ENCODE measurements at regions of chr1 and their contacts with region 1.

Region 1: DNA sequence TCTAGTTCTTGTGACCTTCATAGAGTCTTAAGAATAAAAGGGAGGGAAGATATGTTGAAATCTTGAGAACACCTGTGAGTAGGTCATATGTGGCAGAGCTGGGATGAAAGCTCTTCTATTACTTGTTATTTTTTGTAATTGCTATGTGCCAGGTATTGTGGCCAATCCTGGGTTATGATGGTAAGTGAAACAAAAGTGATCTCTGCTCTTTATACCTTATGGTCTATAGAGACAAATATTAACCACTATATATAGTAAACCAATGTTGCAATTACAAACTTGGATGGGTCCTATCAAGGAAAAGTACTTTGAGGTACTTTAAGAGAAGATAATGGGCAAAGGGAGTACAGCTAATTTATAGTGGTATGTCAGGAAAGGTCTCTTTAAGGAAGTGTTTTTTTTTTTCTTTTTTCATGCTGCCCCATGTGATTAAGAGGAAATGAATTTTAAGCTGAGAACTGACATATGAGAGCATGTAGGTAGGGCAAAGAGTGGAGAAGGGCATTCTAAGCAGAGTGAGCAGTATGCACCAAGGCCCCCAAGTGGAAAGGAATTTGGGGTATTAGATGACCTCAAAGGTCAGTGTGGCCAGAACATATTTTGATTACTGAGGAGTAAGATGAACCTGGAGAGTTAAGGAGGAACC is 43.3 kb downstream of the POU2F1 start:
- DNase-seq: peak in 2 of 3 donors; percentile 12 to 25
- H3K4me3 ChIP-seq: no peak overlapping the region
- H3K4me3 Mint-ChIP-seq: no peak overlapping the region
- H3K27ac ChIP-seq: no peak overlapping the region
- H3K27ac Mint-ChIP-seq: no peak overlapping the region
- H3K4me1 ChIP-seq: peaks cover 14 to 21% of the 10 kb centered on the region in 2 donors
- H3K4me1 Mint-ChIP-seq: peaks cover 17% of the 10 kb centered on the region
- H3K27me3 ChIP-seq: no peaks in the 10 kb centered on the region
- H3K27me3 Mint-ChIP-seq: no peaks in the 10 kb centered on the region
- CTCF ChIP-seq: no peak

Region 2: GRCh38 chr1:167294528-167294927 is 30.6 kb after region 1 on chr1:
- intact Hi-C with region 1: no loop called
- DNase-seq: peak; percentile 36 to 67 (median 56)
- H3K4me3 ChIP-seq: no peak overlapping the region
- H3K4me3 Mint-ChIP-seq: peak overlapping the region in 1 of 2 donors; percentile 5
- H3K27ac ChIP-seq: peak overlapping the region; percentile 44 to 64
- H3K27ac Mint-ChIP-seq: peak overlapping the region; percentile 77 to 91 (median 82)
- H3K4me1 ChIP-seq: peaks cover 56 to 74% of the 10 kb centered on the region in 2 donors
- H3K4me1 Mint-ChIP-seq: peaks cover 74% of the 10 kb centered on the region
- H3K27me3 ChIP-seq: no peaks in the 10 kb centered on the region
- H3K27me3 Mint-ChIP-seq: no peaks in the 10 kb centered on the region
- CTCF ChIP-seq: no peak

Region 3: DNA sequence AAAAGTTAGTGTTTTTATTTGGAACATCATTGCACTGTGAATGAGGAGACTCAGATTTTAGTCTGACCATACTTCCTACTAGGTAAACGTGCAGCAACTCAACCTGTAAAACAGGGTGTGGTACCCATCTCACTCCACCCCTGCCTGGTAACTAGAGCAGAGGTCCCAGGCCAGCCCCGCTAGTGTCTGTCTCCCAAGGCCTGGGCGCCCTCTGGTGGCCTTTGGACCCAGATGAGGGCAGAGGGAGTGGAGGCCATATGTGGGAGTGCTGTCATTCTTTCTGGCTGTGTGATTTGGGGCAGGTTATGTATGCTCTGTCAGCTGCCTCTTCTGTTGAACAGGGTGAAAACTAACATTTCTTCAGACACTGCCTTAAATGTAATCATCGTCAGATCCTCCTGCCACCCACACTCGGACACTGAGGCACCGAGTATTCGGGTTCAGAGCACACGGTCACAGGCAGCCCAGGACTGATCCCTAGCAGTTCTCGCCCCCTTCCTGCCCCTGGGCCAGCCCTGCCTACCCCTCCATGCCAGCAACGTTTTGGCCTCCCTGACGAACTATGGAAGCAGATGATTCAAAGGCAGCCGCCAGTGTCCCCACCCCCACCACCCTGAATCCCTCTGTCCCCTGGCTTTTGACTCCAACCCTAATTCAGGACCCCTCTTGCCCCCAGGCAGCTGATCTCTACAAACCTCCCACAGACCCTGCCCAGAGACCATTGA is 178.3 kb after region 1 on chr1:
- intact Hi-C with region 1: loop called (anchors 2 to 5 kb)
- DNase-seq: peak; percentile 59 to 67 (median 62)
- H3K4me3 ChIP-seq: no peak overlapping the region
- H3K4me3 Mint-ChIP-seq: peak overlapping the region in 1 of 2 donors; percentile 16
- H3K27ac ChIP-seq: no peak overlapping the region
- H3K27ac Mint-ChIP-seq: peak overlapping the region in 3 of 7 donors; percentile 6 to 42 (median 38)
- H3K4me1 ChIP-seq: peaks cover 20 to 24% of the 10 kb centered on the region in 2 donors
- H3K4me1 Mint-ChIP-seq: peaks cover 35% of the 10 kb centered on the region
- H3K27me3 ChIP-seq: peaks cover 0 to 15% of the 10 kb centered on the region in 2 donors
- H3K27me3 Mint-ChIP-seq: peaks cover 16 to 24% (median 18%) of the 10 kb centered on the region in 3 donors
- CTCF ChIP-seq: peak; percentile 93

Measured in CD14-positive monocyte (primary cell).